Activated CD8-positive, alpha-beta T cell treated with anti-CD3 and anti-CD28 coated beads, Interleukin-2, amount 10 ng/mL, durations not matched to agents 7 days and 5 days (primary cell): ENCODE measurements at regions of chr10 and their contacts with region 1.

Region 1: DNA sequence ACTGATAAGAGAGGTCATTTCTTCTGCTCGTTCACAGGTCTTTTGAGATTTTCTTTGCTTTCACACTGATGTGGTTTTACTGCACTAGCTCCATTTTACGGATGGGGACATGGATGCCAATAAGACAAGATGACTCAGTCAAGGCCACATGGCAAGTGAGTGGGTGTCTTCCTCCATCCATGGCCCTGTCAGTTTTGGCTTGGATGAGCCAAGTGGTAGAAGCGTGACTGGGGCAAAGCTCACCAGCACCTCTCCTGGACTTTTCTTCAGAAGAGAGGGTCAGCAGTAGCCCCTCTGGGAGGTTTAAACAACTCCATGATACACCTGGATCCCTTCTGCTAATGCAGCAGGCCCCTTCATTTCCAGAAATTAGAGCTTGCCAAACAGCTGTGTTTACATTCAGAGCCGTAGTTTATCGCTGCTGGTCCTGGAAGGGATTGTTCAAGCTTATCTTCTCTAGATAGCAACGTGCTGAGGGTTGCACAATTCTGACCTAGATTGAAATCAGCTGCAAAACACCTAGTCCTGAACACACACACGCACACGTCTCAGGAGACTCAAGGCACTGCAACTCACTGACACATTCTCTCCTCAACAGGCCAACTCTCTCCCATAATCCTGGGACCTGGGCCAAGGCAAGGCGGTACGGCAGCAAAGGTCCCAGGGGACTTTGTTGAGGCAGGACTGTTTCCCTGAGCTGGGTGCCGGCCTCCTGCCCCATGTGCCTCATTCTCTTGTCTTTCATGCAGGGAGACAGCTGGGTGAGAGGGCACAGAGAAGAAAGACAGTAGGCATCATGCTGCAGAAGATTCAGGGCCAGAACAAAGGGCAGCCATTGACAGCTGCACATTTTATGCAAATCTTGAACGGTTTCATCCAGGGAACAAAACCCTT is 14.2 kb upstream of the PDCD4 start:
- DNase-seq: peak; percentile 21
- ATAC-seq: no peak
- H3K4me3 Mint-ChIP-seq: peak overlapping the region; percentile 45
- H3K27ac Mint-ChIP-seq: peak overlapping the region; percentile 60
- H3K4me1 Mint-ChIP-seq: peaks cover 84% of the 10 kb centered on the region
- H3K27me3 Mint-ChIP-seq: no peaks in the 10 kb centered on the region

Region 2: GRCh38 chr10:110834629-110835301 is 22.7 kb before region 1 on chr10:
- CTCF ChIA-PET with region 1: interaction called, 14 read pairs
- POLR2A ChIA-PET with region 1: no interaction called
- DNase-seq: peak; percentile 58
- ATAC-seq: peak; percentile 73
- H3K4me3 Mint-ChIP-seq: no peak overlapping the region
- H3K27ac Mint-ChIP-seq: peak overlapping the region; percentile 81
- H3K4me1 Mint-ChIP-seq: peaks cover 32% of the 10 kb centered on the region
- H3K27me3 Mint-ChIP-seq: no peaks in the 10 kb centered on the region

Region 3: GRCh38 chr10:110843031-110843430 is 14.5 kb before region 1 on chr10:
- CTCF ChIA-PET with region 1: interaction called, 14 read pairs
- POLR2A ChIA-PET with region 1: interaction called, 11 read pairs
- DNase-seq: peak; percentile 69
- ATAC-seq: peak; percentile 88
- H3K4me3 Mint-ChIP-seq: peak overlapping the region; percentile 12
- H3K27ac Mint-ChIP-seq: peak overlapping the region; percentile 60
- H3K4me1 Mint-ChIP-seq: peaks cover 50% of the 10 kb centered on the region
- H3K27me3 Mint-ChIP-seq: no peaks in the 10 kb centered on the region

Region 4: GRCh38 chr10:111498560-111498959 is 641.0 kb after region 1 on chr10:
- CTCF ChIA-PET with region 1: no interaction called
- POLR2A ChIA-PET with region 1: no interaction called
- DNase-seq: no peak
- ATAC-seq: no peak
- H3K4me3 Mint-ChIP-seq: no peak overlapping the region
- H3K27ac Mint-ChIP-seq: no peak overlapping the region
- H3K4me1 Mint-ChIP-seq: no peaks in the 10 kb centered on the region
- H3K27me3 Mint-ChIP-seq: no peaks in the 10 kb centered on the region